ENCODE measurements at regions of chr19 and their contacts with region 1.

Region 1: GRCh38 chr19:11035441-11036377 is 53.6 kb upstream of the LDLR start:
- DNase-seq: peak; percentile 95
- ATAC-seq: peak; percentile 97
- H3K4me3 Mint-ChIP-seq: no peak overlapping the region
- H3K27ac Mint-ChIP-seq: peak overlapping the region; percentile 53
- H3K4me1 Mint-ChIP-seq: no peaks in the 10 kb centered on the region
- H3K27me3 Mint-ChIP-seq: no peaks in the 10 kb centered on the region
- CTCF ChIP-seq: peak; percentile 86

Region 2: GRCh38 chr19:10995926-10996600 is 39.6 kb before region 1 on chr19:
- CTCF ChIA-PET with region 1: no interaction called
- POLR2A ChIA-PET with region 1: no interaction called
- DNase-seq: no peak
- ATAC-seq: no peak
- H3K4me3 Mint-ChIP-seq: no peak overlapping the region
- H3K27ac Mint-ChIP-seq: no peak overlapping the region
- H3K4me1 Mint-ChIP-seq: no peaks in the 10 kb centered on the region
- H3K27me3 Mint-ChIP-seq: no peaks in the 10 kb centered on the region
- CTCF ChIP-seq: no peak

Region 3: DNA sequence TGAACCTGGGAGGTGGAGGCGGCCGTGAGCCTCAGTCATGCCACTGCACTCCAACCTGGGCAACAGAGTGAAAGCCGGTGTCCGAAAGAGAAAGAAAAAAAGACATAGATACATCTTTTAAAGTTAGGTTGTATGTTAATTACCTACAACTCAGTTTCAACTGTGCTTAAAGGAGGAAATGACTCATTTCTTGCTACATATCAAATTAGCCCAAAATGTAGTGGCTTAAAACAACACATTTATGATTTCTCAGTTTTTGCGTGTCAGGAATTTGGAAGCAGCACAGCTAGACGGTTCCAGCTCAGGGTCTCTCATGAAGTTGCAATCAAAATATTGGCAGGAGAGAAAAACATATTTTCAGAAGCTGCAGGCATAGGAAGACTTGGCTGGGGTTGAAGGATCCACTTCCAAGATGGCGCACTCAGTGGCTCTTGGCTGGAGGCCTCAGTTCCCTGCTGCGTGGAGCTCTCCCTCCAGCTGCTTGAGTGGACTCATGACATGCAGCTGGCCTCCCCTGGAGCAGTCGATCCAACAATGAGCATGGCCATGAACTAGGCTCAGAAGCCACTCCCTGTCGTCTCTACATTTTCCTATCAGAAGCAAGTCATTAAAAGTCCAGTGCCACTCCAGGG is 60.6 kb after region 1 on chr19:
- CTCF ChIA-PET with region 1: interaction called, 10 read pairs
- POLR2A ChIA-PET with region 1: no interaction called
- DNase-seq: no peak
- ATAC-seq: no peak
- H3K4me3 Mint-ChIP-seq: no peak overlapping the region
- H3K27ac Mint-ChIP-seq: peak overlapping the region; percentile 90
- H3K4me1 Mint-ChIP-seq: peaks cover 42% of the 10 kb centered on the region
- H3K27me3 Mint-ChIP-seq: no peaks in the 10 kb centered on the region
- CTCF ChIP-seq: no peak